Aorta (tissue), 5 donors: ENCODE measurements at regions of chr3 and their contacts with region 1.

Region 1: DNA sequence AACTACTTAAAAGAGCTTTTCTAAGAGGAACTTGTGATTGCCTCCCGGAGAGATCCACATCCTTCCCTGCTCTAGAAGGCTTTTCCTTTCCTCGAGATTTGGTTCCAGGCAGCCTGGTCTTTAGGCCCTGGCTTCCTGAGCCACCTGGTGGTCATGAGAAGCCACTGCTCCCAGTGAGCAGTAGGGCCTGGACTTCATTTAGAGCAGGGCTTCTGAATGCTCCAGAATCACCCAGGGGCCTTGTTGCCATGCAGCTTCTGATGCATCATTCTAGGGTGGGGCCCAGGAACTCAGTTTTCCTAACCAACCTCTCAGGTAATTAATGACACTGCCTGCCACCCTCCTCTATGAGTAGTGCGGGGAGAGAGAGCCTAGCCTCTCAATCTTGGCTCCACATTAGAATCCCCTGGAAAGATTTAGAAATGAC is 29.6 kb downstream of the PSMD6 start:
- DNase-seq: peak; percentile 77 to 79
- ATAC-seq: peak; percentile 89
- H3K4me3 ChIP-seq: no peak overlapping the region
- H3K27ac ChIP-seq: no peak overlapping the region
- H3K4me1 ChIP-seq: no peaks in the 10 kb centered on the region
- H3K27me3 ChIP-seq: no peaks in the 10 kb centered on the region

Region 2: DNA sequence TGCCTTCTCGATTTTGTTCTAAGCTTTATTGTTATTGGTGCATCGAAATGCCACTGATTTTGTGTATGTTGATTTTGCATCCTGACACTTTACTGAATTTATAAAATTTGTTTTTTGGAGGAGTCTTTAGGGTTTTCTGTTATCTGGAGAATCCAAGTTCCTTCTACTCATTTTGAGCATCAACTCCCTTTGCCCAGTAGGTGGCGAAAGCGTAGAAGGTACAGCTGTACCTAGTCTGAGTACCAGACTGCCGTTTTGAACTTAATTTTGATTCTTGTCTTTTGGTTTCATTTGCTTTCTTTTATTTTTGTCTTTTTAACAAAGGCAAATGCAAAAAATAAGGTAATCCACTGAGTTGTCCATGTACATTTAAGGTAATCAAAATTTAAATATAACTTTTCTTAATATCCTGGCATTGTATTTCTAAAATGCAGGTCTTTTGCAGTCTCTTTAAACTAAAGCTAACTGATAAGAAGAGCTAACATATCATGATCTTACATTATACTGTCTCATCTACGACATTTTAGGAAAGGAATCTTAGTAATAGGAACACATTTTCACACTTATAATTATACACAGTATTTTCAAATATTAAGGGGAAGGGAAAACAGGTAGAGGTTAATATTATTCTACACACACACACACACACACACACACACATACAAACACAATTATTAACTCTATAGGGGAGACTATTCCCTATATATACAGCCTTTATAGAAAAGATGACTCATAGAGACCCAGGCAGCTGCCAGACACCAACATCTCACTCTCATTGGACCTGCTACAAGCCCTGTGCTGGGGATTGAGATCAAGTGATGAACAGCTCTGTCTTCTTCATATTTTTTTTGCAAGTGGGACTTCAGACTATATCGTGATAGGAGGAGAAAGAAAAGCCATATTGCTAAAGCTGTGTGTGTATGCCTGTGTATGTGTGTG is 643.8 kb before region 1 on chr3:
- intact Hi-C with region 1: loop called in 1 of 2 experiments (anchors 5 kb)
- DNase-seq: peak in 1 of 2 donors; percentile 54
- ATAC-seq: no peak
- H3K4me3 ChIP-seq: no peak overlapping the region
- H3K27ac ChIP-seq: no peak overlapping the region
- H3K4me1 ChIP-seq: no peaks in the 10 kb centered on the region
- H3K27me3 ChIP-seq: no peaks in the 10 kb centered on the region

Region 3: GRCh38 chr3:63863148-63864007 is 130.3 kb before region 1 on chr3 and contains the starts of genes ATXN7 and THOC7:
- intact Hi-C with region 1: loop called (anchors 10 kb)
- DNase-seq: peak; percentile 78 to 93
- ATAC-seq: peak; percentile 80
- H3K4me3 ChIP-seq: peak within 1 kb of the TSS; percentile 90 to 92
- H3K27ac ChIP-seq: peak within 1 kb of the TSS in 1 of 2 donors; percentile 68
- H3K4me1 ChIP-seq: peaks cover 2 to 6% of the 10 kb centered on the region in 2 donors
- H3K27me3 ChIP-seq: no peaks in the 10 kb centered on the region
- total RNA-seq, gene ATXN7: 52.3 to 52.5 TPM
- total RNA-seq, gene THOC7: 53.8 TPM

Region 4: GRCh38 chr3:63911873-63912767 is 81.5 kb before region 1 on chr3 and contains the start of gene SCAANT1:
- intact Hi-C with region 1: loop called in 1 of 2 experiments (anchors 10 kb)
- DNase-seq: peak; percentile 94 to 96
- ATAC-seq: peak; percentile 94
- H3K4me3 ChIP-seq: peak within 1 kb of the TSS; percentile 86 to 99
- H3K27ac ChIP-seq: peak within 1 kb of the TSS; percentile 98 to 99
- H3K4me1 ChIP-seq: peaks cover 0 to 4% of the 10 kb centered on the region in 2 donors
- H3K27me3 ChIP-seq: no peaks in the 10 kb centered on the region
- total RNA-seq, gene SCAANT1: not detected

Region 5: DNA sequence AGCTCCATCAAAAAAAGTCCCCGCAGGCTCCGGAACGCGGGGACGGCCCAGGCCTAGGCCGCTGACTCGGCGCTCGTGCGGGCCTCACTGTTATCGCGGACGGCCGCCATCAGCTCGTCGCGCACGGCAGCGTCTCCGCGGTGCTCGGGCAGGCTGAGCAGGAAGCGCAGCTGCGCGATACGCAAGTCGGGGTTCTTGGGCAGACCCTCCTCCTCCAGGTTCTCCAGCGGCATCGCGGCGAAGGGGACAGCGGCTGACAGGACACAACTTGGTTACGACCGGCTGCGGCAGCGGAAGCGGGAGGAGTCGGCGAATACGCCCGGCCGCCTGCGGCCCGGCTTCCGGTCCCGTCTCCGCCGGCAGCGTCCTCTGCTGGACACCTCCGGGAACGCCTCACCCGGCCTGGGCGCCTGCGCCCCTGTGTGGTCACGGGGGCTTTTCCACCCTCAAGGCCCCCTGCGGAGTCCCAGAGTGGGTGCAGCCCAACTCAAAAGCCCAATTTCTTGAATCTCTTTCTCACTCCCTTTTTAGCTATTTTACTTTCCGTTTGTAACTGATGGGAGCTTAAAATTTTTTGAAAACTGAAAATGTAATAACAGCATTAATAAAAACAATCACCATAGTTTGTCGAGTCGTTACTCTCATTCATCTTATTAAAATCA is 29.7 kb after region 1 on chr3 and contains the start of gene PSMD6:
- intact Hi-C with region 1: no loop called
- DNase-seq: peak; percentile 91 to 97
- ATAC-seq: peak; percentile 99
- H3K4me3 ChIP-seq: peak within 1 kb of the TSS; percentile 83 to 99
- H3K27ac ChIP-seq: peak within 1 kb of the TSS in 1 of 2 donors; percentile 93
- H3K4me1 ChIP-seq: no peaks in the 10 kb centered on the region
- H3K27me3 ChIP-seq: no peaks in the 10 kb centered on the region
- total RNA-seq, gene PSMD6: 47.5 to 52.9 TPM

Region 6: GRCh38 chr3:64224826-64225610 is 231.4 kb after region 1 on chr3 and contains the start of gene PRICKLE2:
- intact Hi-C with region 1: no loop called
- DNase-seq: peak; percentile 91 to 96
- ATAC-seq: peak; percentile 85
- H3K4me3 ChIP-seq: peak within 1 kb of the TSS; percentile 34 to 60
- H3K27ac ChIP-seq: peak within 1 kb of the TSS; percentile 12 to 98
- H3K4me1 ChIP-seq: no peaks in the 10 kb centered on the region
- H3K27me3 ChIP-seq: no peaks in the 10 kb centered on the region
- total RNA-seq, gene PRICKLE2: 22.0 to 42.1 TPM

Region 7: GRCh38 chr3:65094723-65095122 is 1101.1 kb after region 1 on chr3:
- intact Hi-C with region 1: no loop called
- DNase-seq: no peak
- ATAC-seq: no peak
- H3K4me3 ChIP-seq: no peak overlapping the region
- H3K27ac ChIP-seq: no peak overlapping the region
- H3K4me1 ChIP-seq: no peaks in the 10 kb centered on the region
- H3K27me3 ChIP-seq: no peaks in the 10 kb centered on the region